Activated T-helper 1 cell treated with anti-CD3 and anti-CD28 coated beads, Interleukin-12 subunit alpha, Interleukin-12 subunit beta, Interleukin-2, Interleukin-4 antibody, amounts not matched to agents 30 ng/mL and 10 ng/mL and 1 ng/mL, durations not matched to agents 14 hours and 24 hours and 36 hours (primary cell): ENCODE measurements at regions of chr1 and their contacts with region 1.

Region 1: GRCh38 chr1:200258447-200259375 is 151.1 kb downstream of the ZNF281 start:
- DNase-seq: no peak
- H3K4me3 Mint-ChIP-seq: no peak overlapping the region
- H3K27ac Mint-ChIP-seq: no peak overlapping the region
- H3K4me1 Mint-ChIP-seq: peaks cover 35% of the 10 kb centered on the region
- H3K27me3 Mint-ChIP-seq: peaks cover 14% of the 10 kb centered on the region

Region 2: DNA sequence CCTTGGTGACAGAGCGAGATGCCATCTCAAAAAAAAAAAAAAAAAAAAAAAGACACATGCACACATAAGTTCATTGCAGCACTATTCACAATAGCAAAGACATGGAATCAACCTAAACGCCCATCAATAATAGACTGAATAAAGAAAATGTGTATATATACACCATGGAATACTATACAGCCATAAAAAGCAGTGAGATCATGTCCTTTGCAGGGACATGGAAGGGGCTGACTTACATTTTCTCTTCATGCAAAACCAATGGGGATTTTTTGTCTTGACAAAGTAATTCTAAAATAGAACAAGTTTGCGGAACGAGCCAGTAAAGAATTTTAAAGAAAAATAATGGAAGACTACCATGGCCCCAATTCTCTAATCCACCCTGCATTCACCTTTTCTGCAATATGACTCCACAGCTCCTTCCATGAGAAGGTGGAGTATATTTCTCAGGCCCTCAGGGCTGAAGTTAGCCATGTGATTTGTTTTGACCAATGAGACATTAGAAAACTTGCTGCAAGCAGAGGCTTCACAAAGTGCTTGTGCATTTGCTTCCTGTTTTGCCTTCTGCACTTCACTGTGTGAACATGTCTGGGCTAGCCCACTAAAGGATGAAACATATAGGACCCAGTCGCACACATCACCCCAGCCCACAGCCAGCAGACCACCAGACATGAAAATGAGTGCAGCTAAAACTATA is 310.0 kb before region 1 on chr1:
- intact Hi-C with region 1: loop called (anchors 2 kb)
- DNase-seq: no peak
- H3K4me3 Mint-ChIP-seq: no peak overlapping the region
- H3K27ac Mint-ChIP-seq: no peak overlapping the region
- H3K4me1 Mint-ChIP-seq: no peaks in the 10 kb centered on the region
- H3K27me3 Mint-ChIP-seq: peaks cover 50% of the 10 kb centered on the region

Region 3: DNA sequence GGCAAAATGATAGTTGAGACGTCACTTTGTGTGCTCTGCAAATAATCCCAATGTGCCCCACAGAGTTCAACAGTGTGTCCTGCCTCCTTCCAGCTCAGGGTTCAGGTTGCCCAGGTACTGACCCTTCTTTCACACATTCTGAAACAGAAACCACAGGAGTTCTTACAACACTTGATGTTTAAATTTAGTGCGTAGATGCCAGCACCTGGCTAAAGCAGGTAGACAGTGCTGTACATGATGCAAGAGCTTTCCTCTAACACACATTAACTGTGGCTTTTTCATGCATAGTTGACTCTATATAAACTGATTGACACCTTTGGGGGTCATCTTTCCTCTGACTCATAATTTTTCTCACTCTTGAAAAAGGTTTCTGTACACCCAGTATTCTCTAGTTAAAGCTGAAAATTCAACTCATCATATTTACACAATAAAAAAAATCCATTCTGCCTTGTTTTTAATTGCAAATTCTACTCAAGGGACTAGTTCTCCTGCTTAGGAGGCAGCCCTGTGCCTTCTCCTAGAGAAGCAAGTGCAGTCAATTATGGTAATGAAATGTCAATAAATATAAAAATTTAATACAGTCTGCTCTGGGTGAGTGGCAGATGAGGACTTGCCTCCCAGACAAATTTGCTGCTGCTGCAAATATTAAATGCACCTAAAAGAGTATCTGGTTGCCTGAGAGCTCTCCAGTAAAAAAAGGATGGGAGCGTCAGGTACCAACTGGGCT is 139.8 kb before region 1 on chr1:
- intact Hi-C with region 1: no loop called
- DNase-seq: no peak
- H3K4me3 Mint-ChIP-seq: no peak overlapping the region
- H3K27ac Mint-ChIP-seq: no peak overlapping the region
- H3K4me1 Mint-ChIP-seq: no peaks in the 10 kb centered on the region
- H3K27me3 Mint-ChIP-seq: peaks cover 28% of the 10 kb centered on the region

Region 4: DNA sequence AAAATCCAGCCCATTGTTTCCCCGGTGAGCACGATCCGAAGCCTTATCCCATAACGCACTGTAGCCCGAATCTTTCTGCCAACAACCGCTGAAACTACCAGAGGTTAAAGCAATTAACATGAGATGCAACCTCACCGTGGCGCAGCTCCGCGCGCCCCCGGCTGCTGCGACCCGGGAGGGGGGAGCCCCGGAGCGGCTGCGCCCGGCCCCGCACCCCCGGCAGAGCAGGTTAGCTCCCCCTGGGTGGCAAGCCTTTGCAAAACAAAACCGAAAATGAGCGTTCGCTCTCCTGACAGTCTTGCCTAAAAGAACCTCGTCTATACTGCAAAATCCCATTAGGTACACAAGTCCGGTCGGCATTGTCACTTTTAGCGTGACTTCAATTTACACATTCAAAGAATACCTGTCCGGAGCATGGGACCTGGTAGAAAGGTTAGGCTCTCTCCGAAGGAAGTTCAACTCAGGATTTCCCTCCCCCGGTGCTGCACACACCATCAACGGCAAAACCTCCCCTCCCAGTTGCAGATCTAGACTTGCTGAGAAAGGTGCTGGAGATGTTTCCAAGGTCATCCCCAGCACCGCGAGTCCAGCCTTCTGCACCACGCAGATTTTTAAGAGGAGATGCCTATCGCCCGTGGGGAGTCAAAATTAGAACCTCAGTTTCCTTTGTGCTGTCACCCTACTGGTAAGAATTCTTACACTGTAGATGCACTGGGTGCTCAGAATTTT is 43.6 kb after region 1 on chr1:
- intact Hi-C with region 1: loop called (anchors 2 kb)
- DNase-seq: peak; percentile 53
- H3K4me3 Mint-ChIP-seq: peak overlapping the region; percentile 83
- H3K27ac Mint-ChIP-seq: no peak overlapping the region
- H3K4me1 Mint-ChIP-seq: peaks cover 23% of the 10 kb centered on the region
- H3K27me3 Mint-ChIP-seq: peaks cover 17% of the 10 kb centered on the region

Region 5: DNA sequence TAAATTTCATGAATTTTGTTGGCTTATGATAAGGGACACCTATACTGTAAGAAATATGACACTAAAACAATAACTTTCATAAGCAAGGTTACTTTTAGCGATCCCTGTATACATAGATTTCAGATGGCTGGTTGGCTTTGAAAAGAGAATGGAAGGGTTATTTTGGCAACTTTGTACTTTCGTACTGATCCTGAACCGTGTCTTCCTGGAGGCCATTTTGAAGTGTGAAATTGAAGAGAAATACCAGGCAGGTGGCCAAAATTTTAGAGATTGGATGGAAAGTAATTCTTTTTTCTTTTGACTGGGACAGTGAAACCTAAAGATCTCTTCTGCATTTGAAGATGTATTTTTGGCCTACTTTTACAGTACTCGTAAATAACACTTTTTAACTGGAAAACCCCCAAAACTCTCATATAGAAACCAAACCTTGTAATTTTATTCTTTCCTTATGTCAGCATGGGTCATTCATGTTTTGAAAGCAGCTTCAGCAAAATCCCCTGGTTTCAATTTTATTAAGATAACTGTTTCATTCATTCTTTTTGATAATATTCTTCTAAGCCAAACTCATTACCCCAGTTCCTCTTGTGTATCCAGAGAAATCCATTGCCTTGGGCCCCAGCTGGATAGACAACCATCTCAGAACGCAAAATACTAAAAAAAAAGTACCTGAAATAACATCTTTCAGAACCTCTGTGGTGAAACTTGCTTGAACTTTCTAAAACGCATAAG is 189.5 kb after region 1 on chr1:
- intact Hi-C with region 1: loop called (anchors 1 kb)
- DNase-seq: no peak
- H3K4me3 Mint-ChIP-seq: peak overlapping the region; percentile 53
- H3K27ac Mint-ChIP-seq: peak overlapping the region; percentile 97
- H3K4me1 Mint-ChIP-seq: peaks cover 59% of the 10 kb centered on the region
- H3K27me3 Mint-ChIP-seq: no peaks in the 10 kb centered on the region